Right ventricle myocardium inferior (tissue), 1 donor: ENCODE measurements at regions of chr15 and their contacts with region 1.

Region 1: GRCh38 chr15:76139368-76140073 is 79.7 kb downstream of the TMEM266 start:
- DNase-seq: no peak
- ATAC-seq: peak; percentile 81

Region 2: GRCh38 chr15:75502360-75502759 is 637.2 kb before region 1 on chr15:
- intact Hi-C with region 1: no loop called
- DNase-seq: no peak
- ATAC-seq: no peak

Region 3: GRCh38 chr15:75809986-75810750 is 329.4 kb before region 1 on chr15:
- intact Hi-C with region 1: loop called (anchors 10 kb)
- DNase-seq: no peak
- ATAC-seq: no peak

Region 4: DNA sequence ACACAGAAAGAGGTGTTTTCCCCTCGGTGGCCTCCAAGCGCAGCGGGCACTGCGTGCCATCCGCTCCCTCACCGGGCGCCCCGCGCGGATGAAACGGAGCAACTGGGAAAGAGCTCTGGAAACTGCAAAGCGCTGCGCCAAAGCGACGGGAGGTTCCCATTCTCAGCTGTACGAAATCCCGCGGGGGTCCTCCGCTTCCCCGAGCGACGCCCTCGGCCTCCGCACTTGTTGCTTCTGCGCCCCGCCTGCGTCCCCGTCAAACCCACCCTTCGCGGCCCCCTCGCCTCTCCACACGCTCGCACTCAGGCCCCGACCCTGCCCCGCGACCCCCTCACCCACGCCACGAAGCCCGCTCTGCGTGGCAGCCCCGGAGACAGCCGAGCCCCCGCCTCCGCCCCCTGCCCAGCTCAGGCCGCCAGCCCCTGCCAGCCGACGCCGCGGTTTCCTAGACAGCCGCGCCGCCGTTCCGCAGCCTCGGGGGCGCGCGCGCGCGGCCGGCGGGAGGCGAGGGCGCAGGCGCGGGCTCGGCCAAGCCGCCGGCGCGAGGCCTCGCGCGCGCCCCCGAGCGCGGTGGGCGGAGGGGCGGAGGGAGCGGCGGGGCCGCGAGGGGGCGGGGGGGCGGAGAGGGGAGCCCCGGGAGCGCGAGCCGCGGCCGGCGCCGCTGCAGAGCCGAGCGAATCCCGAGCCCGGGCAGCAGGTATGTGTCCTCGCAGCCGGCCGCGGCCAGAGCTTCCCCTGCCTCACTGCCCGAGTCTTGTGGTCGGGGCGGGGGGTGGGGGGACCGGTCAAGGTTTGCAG is 80.0 kb before region 1 on chr15 and contains the start of gene TMEM266:
- intact Hi-C with region 1: loop called (anchors 2 kb)
- DNase-seq: no peak
- ATAC-seq: peak; percentile 52
- total RNA-seq, gene TMEM266: not detected